Sciatic nerve (tissue), 2 donors: ENCODE measurements at regions of chr17 and their contacts with region 1.

Region 1: DNA sequence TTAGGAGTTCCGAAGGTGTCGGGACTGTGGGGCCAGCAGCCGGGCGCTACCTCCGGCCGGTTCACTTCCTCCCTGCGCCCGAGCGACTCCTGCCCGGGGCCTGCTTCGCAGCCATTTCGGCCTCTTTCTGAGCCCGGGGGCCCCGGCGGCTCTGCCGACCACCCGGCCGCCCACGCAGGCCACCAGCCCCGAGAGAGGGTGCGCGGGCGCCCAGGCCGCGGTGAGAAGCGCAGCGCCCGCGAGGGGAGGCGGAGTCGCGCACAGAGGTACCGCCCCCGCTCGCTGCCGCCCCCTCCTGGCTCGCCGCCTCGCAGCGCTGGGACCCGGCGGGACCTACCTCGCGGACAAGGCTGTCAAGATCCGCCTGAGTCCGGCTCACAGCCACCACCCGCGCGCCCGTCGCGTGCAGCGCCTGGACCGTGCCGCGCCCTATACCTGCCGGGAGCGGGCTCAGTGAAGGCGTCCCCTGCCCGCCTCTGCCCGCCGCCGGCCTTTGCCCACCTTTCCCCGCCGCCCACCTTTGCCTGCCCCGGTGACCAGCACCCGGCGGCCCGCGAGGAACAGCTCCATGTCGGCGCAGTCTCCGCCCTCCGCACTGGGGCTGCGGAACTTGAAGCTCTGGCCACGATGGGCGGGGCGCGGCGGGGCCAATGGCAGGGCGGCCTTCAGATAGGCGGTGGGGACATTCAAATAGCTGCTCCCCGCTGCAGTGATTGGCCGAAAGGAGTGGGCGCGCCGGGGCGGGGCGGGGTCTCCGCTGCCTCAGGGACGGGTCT is at the start of gene DCXR:
- DNase-seq: peak; percentile 97
- ATAC-seq: peak; percentile 97
- total RNA-seq, gene DCXR: 80.0 TPM

Region 2: DNA sequence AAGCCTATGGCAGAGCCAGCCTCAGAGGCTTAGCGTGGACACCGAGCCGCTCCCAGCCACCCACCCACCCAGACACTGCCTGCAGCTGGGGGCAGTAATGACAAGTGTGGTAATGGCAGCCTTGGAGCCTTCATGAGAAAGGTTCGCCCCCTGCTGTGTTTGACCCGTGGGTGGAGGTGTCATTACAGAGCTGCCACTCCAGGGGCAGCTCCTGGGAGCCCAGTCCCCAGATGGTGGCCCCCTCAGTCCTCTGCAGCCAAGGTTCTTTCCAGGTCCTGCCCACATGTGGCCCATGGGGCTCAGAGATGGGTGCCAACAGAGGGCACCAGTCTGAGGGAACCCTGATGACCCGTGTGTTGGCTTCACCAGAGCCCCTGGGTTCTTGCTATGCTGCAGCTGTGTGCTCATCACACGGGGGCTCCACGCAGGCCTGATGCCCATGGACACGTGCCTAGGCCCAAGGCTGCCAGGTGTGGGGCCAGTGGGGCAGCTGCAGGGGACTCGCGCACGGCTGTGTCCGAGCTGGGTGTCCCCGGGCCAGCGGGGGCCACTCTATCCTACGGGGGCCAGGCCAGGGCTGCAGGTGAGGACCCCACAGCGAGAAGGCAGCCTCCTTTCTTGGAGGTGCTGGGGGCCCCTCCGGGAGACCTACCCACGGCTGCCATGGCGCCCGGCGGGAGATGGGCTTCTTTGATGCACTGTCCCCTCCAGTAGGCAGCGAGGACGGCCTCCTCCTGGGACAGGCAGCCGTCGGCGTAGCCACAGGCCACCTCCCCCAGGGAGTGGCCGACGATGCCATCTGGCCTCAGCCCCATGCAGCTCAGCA is 52.6 kb after region 1 on chr17:
- intact Hi-C with region 1: loop called (anchors 10 kb)
- DNase-seq: no peak
- ATAC-seq: no peak

Region 3: GRCh38 chr17:82315703-82316358 is 278.5 kb after region 1 on chr17:
- intact Hi-C with region 1: loop called (anchors 10 kb)
- DNase-seq: no peak
- ATAC-seq: peak; percentile 30